Activated CD4-positive, alpha-beta T cell treated with anti-CD3 and anti-CD28 coated beads for 36 hours (primary cell): ENCODE measurements at regions of chr1 and their contacts with region 1.

Region 1: GRCh38 chr1:19918057-19918456 is 5.4 kb downstream of the PLA2G2E start:
- DNase-seq: peak; percentile 90
- ATAC-seq: peak; percentile 78
- H3K4me3 Mint-ChIP-seq: no peak overlapping the region
- H3K27ac Mint-ChIP-seq: no peak overlapping the region
- H3K4me1 Mint-ChIP-seq: peaks cover 2% of the 10 kb centered on the region
- H3K27me3 Mint-ChIP-seq: no peaks in the 10 kb centered on the region

Region 2: GRCh38 chr1:19682257-19682656 is 235.8 kb before region 1 on chr1:
- CTCF ChIA-PET with region 1: no interaction called
- POLR2A ChIA-PET with region 1: no interaction called
- intact Hi-C with region 1: no loop called
- DNase-seq: no peak
- ATAC-seq: no peak
- H3K4me3 Mint-ChIP-seq: no peak overlapping the region
- H3K27ac Mint-ChIP-seq: no peak overlapping the region
- H3K4me1 Mint-ChIP-seq: peaks cover 1% of the 10 kb centered on the region
- H3K27me3 Mint-ChIP-seq: no peaks in the 10 kb centered on the region

Region 3: GRCh38 chr1:19940486-19941205 is 22.6 kb after region 1 on chr1:
- CTCF ChIA-PET with region 1: no interaction called
- POLR2A ChIA-PET with region 1: no interaction called
- intact Hi-C with region 1: loop called in 1 of 2 experiments (anchors 1 kb)
- DNase-seq: no peak
- ATAC-seq: no peak
- H3K4me3 Mint-ChIP-seq: no peak overlapping the region
- H3K27ac Mint-ChIP-seq: no peak overlapping the region
- H3K4me1 Mint-ChIP-seq: no peaks in the 10 kb centered on the region
- H3K27me3 Mint-ChIP-seq: no peaks in the 10 kb centered on the region

Region 4: DNA sequence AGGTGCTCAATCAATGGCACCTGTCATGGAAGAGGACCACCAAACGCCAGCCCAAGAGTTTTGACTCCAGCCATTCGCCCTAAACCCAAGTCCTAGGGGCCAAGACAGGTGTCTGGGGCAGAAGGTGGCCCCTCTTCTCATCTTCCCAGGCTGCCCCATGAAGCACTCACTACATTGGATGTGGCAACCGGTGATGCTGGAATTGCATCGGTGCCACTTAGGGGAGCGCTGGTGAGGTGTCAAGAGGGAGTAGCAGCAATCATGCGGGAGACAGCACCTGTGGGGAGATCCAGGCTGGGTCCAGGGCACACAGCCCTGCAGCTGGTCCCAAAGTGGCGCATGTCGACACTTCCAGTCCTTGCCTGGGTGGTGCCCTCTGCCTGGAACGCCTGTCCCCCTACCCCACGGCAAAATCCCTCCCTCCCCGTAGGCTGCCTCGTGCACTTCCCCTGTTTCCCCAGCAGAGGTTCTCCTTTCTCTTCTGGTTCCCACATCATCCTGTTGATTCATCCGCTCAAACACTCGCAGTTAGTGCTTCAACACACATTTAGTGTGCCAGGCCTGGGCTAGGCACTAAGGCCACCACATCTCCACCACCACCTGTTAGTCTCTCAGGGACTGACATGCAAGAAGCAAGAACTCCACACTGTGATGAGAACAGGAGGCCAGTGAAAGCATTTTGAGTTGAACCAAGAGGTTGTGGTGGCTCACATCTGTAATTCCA is 182.7 kb after region 1 on chr1:
- CTCF ChIA-PET with region 1: no interaction called
- POLR2A ChIA-PET with region 1: no interaction called
- intact Hi-C with region 1: loop called in 1 of 2 experiments (anchors 2 kb)
- DNase-seq: peak; percentile 59
- ATAC-seq: peak; percentile 75
- H3K4me3 Mint-ChIP-seq: no peak overlapping the region
- H3K27ac Mint-ChIP-seq: no peak overlapping the region
- H3K4me1 Mint-ChIP-seq: peaks cover 5% of the 10 kb centered on the region
- H3K27me3 Mint-ChIP-seq: peaks cover 2% of the 10 kb centered on the region